Endothelial cell of umbilical vein (primary cell): ENCODE measurements at regions of chr7 and their contacts with region 1.

Region 1: GRCh38 chr7:105487579-105488571 is 34.2 kb downstream of the PUS7 start:
- DNase-seq: peak; percentile 100
- H3K4me3 ChIP-seq: peak overlapping the region in 1 of 3 experiments; percentile 10
- H3K27ac ChIP-seq: peak overlapping the region; percentile 98
- H3K4me1 ChIP-seq: peaks cover 29% of the 10 kb centered on the region
- H3K27me3 ChIP-seq: no peaks in the 10 kb centered on the region
- CTCF ChIP-seq: peak; percentile 22 to 39
- POLR2A ChIP-seq: peak; percentile 78

Region 2: DNA sequence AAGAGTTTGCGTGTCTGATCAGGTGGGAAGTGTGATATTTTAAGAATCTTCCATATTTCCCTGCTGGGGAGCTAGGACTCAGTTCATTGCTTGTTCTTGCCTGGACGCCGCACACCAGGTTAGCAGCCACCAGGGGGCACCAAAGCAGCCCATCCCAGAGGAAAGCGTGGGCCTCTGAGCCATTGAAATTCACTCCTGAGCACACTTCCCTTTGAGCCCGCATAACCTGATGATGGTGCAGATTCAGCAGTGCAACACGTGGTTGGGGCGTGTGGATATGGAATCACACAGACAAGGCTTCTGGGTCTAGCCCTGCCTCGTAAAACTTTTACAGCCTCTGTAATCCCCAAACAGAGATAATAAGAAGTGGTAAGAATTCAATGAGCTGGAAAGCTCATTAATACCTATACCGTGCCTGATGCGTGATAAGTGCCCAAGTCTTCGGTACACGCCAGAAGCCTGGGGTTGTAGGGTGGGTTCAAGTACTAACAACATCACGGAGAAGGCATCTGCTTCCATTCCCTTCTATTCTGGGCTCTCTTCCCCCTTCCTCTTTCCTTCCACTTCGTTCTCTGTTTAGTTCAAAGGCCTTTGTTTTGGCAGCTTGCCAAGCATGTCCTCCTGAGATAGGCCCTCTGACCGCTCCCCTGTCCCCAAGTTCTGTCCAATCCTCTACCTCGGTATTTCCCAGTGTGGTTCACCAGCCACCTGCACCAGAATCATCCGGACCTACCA is 604.0 kb before region 1 on chr7:
- CTCF ChIA-PET with region 1: no interaction called
- POLR2A ChIA-PET with region 1: no interaction called
- dilution Hi-C with region 1: no loop called
- intact Hi-C with region 1: loop called (anchors 1 kb)
- DNase-seq: peak; percentile 87
- H3K4me3 ChIP-seq: peak overlapping the region in 1 of 3 experiments; percentile 35
- H3K27ac ChIP-seq: peak overlapping the region; percentile 31
- H3K4me1 ChIP-seq: peaks cover 5% of the 10 kb centered on the region
- H3K27me3 ChIP-seq: peaks cover 2 to 3% of the 10 kb centered on the region in 2 experiments
- CTCF ChIP-seq: peak; percentile 96 to 97
- POLR2A ChIP-seq: no peak

Region 3: DNA sequence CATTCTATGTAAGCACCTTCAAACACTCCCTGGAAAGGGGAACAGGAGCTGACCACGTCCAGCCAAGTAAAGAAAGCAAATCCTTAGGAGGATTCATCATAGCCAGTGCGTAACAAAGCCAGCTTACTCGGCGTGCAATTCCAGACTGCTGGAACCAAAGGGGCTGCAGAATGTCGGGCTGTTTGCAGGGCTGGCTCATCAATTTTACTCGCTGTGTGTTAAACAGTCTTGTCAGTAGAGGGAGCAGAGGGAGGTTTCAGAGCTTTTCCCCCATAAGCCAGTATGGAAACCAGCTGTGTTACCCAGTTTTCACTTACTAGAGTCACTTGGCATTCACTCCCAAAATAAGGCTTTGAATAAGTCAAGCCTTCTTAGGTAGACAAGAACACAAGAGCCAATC is 346.8 kb before region 1 on chr7:
- CTCF ChIA-PET with region 1: no interaction called
- POLR2A ChIA-PET with region 1: no interaction called
- dilution Hi-C with region 1: no loop called
- intact Hi-C with region 1: loop called (anchors 10 kb)
- DNase-seq: peak; percentile 33
- H3K4me3 ChIP-seq: no peak overlapping the region
- H3K27ac ChIP-seq: no peak overlapping the region
- H3K4me1 ChIP-seq: no peaks in the 10 kb centered on the region
- H3K27me3 ChIP-seq: no peaks in the 10 kb centered on the region
- CTCF ChIP-seq: peak; percentile 20 to 43
- POLR2A ChIP-seq: no peak

Region 4: DNA sequence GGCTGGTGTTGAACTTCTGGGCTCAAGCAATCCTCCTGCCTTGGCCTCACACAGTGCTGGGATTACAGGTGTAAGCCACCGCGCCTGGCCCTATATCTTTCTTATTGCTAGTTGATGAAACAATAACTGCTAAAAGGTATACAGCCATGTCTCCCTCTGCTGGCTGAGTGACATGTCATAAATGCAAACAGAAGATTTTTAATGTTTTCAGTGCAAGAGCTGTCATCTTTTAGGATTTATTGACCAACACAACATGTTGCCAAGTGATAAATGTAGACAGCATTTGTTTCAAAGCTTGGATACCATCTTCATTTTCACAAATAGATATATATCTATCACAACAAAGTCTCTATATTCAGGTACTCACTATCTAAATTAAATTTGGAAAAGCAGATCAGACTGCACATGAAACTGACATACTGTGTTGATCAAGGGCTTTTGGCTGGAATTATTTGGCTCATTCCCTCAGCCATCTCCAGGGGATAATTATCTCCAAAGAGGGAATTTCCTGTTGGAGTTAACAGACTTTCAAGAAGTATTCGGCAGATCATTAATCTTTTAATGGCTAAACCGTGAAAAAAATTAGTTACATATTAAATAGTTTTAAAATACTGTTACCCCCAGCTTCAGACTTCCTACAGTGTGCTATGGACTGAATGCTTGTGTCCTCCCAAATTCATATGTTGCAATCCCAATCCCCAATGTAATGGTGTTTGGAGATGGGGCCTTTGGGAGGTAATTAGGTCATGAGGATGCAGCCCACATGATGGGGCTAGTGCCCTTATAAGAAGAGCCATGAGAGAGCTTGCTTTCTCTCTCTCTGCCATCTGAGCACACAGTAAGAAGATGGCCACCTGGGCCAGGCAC is 57.9 kb before region 1 on chr7:
- CTCF ChIA-PET with region 1: interaction called, 12 read pairs
- POLR2A ChIA-PET with region 1: no interaction called
- dilution Hi-C with region 1: no loop called
- intact Hi-C with region 1: loop called (anchors 1 kb)
- DNase-seq: peak; percentile 83
- H3K4me3 ChIP-seq: no peak overlapping the region
- H3K27ac ChIP-seq: no peak overlapping the region
- H3K4me1 ChIP-seq: no peaks in the 10 kb centered on the region
- H3K27me3 ChIP-seq: no peaks in the 10 kb centered on the region
- CTCF ChIP-seq: peak; percentile 38 to 44
- POLR2A ChIP-seq: no peak

Region 5: GRCh38 chr7:105521533-105522061 is 33.7 kb after region 1 on chr7:
- CTCF ChIA-PET with region 1: no interaction called
- POLR2A ChIA-PET with region 1: no interaction called
- dilution Hi-C with region 1: no loop called
- intact Hi-C with region 1: loop called (anchors 2 kb)
- DNase-seq: peak; percentile 71
- H3K4me3 ChIP-seq: peak overlapping the region; percentile 55 to 79 (median 59)
- H3K27ac ChIP-seq: peak overlapping the region; percentile 70
- H3K4me1 ChIP-seq: peaks cover 7% of the 10 kb centered on the region
- H3K27me3 ChIP-seq: no peaks in the 10 kb centered on the region
- CTCF ChIP-seq: no peak
- POLR2A ChIP-seq: no peak